ENCODE measurements at regions of chr17 and their contacts with region 1.

Region 1: GRCh38 chr17:19766422-19767270 is 18.5 kb upstream of the ALDH3A1 start:
- DNase-seq: peak; percentile 80
- ATAC-seq: peak; percentile 92
- H3K4me3 Mint-ChIP-seq: no peak overlapping the region
- H3K27ac Mint-ChIP-seq: no peak overlapping the region
- H3K4me1 Mint-ChIP-seq: peaks cover 2% of the 10 kb centered on the region
- H3K27me3 Mint-ChIP-seq: no peaks in the 10 kb centered on the region
- CTCF ChIP-seq: no peak

Region 2: DNA sequence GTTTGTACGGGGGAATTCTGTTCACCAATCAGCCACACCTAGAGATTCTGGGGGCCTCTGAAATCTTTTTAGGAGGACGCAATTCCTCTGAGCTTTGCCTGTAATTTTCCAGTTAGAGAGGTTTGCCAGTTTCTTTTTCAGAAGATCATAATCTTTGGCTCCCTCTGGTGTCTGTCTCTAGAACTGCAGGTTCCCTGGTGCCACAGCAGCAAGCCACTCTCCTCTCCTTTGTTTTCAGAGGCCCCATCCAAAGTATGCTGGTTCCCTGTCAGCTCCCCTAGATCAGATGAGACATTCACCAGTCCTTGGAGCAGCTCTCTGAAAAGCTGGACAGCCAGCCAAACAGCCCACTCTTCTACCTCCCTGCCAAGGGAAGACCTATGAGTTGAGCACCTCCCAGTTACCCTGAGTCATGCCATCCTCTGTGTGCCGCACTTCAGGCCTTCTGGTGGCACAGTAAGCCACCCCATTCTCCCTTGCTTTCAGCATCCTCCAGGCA is 319.5 kb before region 1 on chr17:
- CTCF ChIA-PET with region 1: interaction called, 5 read pairs
- POLR2A ChIA-PET with region 1: no interaction called
- intact Hi-C with region 1: loop called (anchors 1 kb)
- DNase-seq: no peak
- ATAC-seq: peak; percentile 65
- H3K4me3 Mint-ChIP-seq: no peak overlapping the region
- H3K27ac Mint-ChIP-seq: no peak overlapping the region
- H3K4me1 Mint-ChIP-seq: peaks cover 5% of the 10 kb centered on the region
- H3K27me3 Mint-ChIP-seq: peaks cover 17% of the 10 kb centered on the region
- CTCF ChIP-seq: peak; percentile 63

Region 3: DNA sequence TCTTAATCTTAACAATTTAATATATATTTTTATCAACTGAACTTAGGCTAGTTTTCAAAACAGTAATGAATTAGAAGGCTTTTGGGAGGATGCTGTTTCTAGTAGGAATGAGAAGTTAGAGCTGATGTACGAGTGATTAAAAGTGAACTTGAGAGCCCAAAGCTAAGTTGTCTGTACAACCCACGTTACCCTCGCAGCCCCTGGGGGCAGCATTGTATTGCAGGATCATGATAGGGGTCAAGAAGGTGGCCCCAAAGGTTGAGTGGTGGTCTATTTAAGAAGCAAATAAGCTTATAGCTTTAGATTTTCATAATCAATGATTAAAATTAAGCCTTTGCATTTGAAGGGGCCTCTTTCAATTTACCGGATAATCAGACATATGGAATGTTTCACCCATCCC is 151.7 kb before region 1 on chr17:
- CTCF ChIA-PET with region 1: interaction called, 20 read pairs
- POLR2A ChIA-PET with region 1: no interaction called
- intact Hi-C with region 1: loop called (anchors 1 kb)
- DNase-seq: no peak
- ATAC-seq: no peak
- H3K4me3 Mint-ChIP-seq: no peak overlapping the region
- H3K27ac Mint-ChIP-seq: no peak overlapping the region
- H3K4me1 Mint-ChIP-seq: no peaks in the 10 kb centered on the region
- H3K27me3 Mint-ChIP-seq: no peaks in the 10 kb centered on the region
- CTCF ChIP-seq: no peak

Region 4: GRCh38 chr17:19744922-19745757 is 21.5 kb before region 1 on chr17:
- CTCF ChIA-PET with region 1: interaction called, 18 read pairs
- POLR2A ChIA-PET with region 1: interaction called, 3 read pairs
- intact Hi-C with region 1: loop called (anchors 2 kb)
- DNase-seq: peak; percentile 74
- ATAC-seq: peak; percentile 97
- H3K4me3 Mint-ChIP-seq: peak overlapping the region; percentile 80
- H3K27ac Mint-ChIP-seq: no peak overlapping the region
- H3K4me1 Mint-ChIP-seq: peaks cover 6% of the 10 kb centered on the region
- H3K27me3 Mint-ChIP-seq: peaks cover 13% of the 10 kb centered on the region
- CTCF ChIP-seq: no peak

Region 5: DNA sequence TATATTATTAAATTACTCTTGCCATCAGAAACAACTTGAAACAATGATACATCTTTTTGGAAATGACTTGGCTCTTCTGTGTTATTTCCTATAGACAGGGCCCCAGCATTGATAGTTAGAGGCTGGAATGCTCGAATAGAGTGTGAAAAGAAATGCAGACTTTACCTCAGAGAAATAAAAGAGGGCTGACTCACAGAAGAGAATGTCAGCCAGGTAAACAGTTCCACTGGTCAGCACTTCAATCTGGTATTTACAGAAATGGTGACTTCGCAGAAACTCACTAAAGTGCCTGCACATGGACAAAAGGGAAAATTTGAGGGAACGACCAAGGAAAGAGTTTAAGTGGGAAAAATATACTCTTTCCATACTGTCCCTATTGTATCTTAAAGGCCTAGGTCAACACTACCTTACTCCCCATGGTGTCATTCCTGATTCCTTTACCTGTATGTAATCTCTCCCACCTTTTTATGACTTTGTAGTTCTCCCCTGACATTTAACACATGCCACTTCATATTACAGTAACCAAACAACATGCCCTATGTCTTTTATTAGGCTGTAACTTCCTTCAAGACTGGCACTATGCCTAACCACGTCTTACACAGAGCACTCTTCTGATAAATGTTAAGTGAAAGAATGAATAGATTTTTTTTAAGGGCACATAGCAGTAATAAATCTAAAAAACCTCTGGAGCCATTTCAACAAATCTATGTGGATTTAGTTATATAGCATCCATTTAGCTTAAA is 174.2 kb after region 1 on chr17:
- CTCF ChIA-PET with region 1: no interaction called
- POLR2A ChIA-PET with region 1: no interaction called
- intact Hi-C with region 1: no loop called
- DNase-seq: no peak
- ATAC-seq: no peak
- H3K4me3 Mint-ChIP-seq: no peak overlapping the region
- H3K27ac Mint-ChIP-seq: no peak overlapping the region
- H3K4me1 Mint-ChIP-seq: peaks cover 7% of the 10 kb centered on the region
- H3K27me3 Mint-ChIP-seq: no peaks in the 10 kb centered on the region
- CTCF ChIP-seq: no peak

Measured in activated B cell treated with CpG ODN at 0.5 μM for 24 hours (primary cell).